K562 (cell line): ENCODE measurements at regions of chr10 and their contacts with region 1.

Region 1: DNA sequence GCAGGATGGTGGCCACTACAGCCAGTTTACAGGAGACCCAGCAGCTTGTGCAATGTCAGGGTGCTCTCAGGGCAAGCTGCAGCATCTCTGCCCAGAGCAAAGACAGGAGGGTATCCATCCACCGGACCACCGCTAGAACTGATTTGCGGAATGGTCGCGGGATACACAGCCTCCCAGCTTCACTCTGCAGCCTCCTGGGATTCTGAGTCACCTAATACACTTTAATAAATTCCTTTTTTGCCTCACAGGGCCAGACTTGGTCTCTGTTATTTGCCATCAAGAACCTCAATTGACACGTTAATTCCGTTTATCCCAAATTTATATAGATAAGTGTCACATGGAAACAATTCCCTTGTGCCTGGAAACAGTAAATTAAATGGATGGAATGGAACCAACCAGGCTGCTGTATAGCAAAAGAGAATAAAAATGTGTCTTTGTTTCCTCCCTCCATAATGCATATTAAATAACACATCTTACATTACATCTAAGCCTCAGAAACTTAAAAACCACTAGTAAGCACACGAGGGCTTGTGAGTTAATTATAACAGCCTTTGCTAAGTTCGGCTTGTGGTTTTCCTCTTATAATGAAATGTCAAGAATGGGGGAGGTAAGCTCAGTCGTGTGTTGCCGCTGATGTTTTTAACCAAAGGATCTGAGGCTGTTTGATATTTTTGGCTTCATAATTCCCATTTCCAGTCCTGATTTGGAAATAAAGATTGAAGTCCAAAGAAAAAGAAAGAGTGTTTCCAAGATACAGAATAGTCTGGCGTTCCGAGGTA is 52.1 kb downstream of the ADRB1 start:
- DNase-seq: no peak
- ATAC-seq: no peak
- H3K4me3 ChIP-seq: no peak overlapping the region
- H3K27ac ChIP-seq: no peak overlapping the region
- H3K4me1 ChIP-seq: peaks cover 2 to 11% of the 10 kb centered on the region in 2 experiments; a peak in 4 of 5 replicates
- H3K27me3 ChIP-seq: peaks cover 6 to 24% of the 10 kb centered on the region in 2 experiments; a peak in 4 of 5 replicates
- CTCF ChIP-seq: no peak
- EP300 ChIP-seq: no peak
- POLR2A ChIP-seq: no peak
- RAD21 ChIP-seq: no peak

Region 2: DNA sequence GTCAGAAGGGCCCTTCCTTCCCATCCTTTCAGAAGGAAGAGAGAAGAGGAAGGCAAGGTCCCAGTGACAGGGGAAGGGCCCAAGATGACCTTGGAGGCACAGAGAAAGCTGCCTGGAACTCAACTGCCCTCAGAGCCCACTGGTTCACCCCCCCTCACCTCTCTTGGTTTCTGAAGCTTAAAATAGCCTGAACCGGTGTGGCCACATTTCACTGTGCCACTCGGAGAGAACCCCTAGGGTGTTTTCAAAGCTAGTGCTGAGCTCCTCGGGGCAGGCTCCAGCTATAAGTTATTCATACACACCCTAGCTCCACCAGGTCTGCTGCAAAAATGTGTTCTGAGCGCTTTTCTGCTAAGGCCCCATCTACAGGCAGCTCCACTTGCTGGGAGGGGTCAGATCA is 113.0 kb before region 1 on chr10:
- CTCF ChIA-PET with region 1: no interaction called
- POLR2A ChIA-PET with region 1: no interaction called
- in situ Hi-C with region 1: no loop called
- intact Hi-C with region 1: loop called (anchors 10 kb)
- DNase-seq: no peak
- ATAC-seq: no peak
- H3K4me3 ChIP-seq: no peak overlapping the region
- H3K27ac ChIP-seq: no peak overlapping the region
- H3K4me1 ChIP-seq: no peaks in the 10 kb centered on the region
- H3K27me3 ChIP-seq: peaks cover 0 to 13% of the 10 kb centered on the region in 2 experiments; a peak in 2 of 5 replicates
- CTCF ChIP-seq: no peak
- EP300 ChIP-seq: no peak
- POLR2A ChIP-seq: no peak
- RAD21 ChIP-seq: no peak